ENCODE measurements at regions of chr19 and their contacts with region 1.

Region 1: DNA sequence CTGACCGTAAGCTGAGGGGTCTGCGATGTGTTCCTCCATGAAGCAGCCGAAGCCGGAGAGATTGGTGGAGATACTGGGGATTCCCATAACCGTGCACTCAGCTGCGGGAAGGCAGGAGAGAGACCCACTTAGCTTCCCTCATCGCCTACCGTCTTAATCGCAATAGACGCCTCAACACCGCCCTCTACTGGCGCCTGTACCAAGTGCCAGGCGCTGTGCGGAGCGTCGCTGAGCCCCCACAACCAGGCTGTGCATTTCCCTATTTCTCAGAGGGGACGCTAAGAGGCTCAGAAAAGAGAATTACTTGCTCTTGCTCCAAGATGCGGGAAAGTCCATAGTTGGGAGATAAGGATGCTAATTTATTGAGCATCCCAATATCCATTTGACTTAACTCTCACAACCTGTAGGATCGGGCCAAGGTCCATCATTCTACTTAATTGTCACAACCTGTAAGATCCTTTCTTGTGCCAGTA is 5.8 kb downstream of the FTL start:
- DNase-seq: peak; percentile 78 to 91 (median 85)
- H3K4me3 ChIP-seq: no peak overlapping the region
- H3K27ac ChIP-seq: no peak overlapping the region
- H3K4me1 ChIP-seq: peaks cover 3% of the 10 kb centered on the region
- H3K27me3 ChIP-seq: no peaks in the 10 kb centered on the region
- CTCF ChIP-seq: peak; percentile 81 to 84 (median 84)
- EP300 ChIP-seq: no peak
- POLR2A ChIP-seq: no peak

Region 2: GRCh38 chr19:48780631-48781391 is 190.1 kb before region 1 on chr19:
- intact Hi-C with region 1: loop called in 2 of 4 experiments (anchors 5 kb)
- DNase-seq: peak in 1 of 5 donors; percentile 49
- H3K4me3 ChIP-seq: no peak overlapping the region
- H3K27ac ChIP-seq: no peak overlapping the region
- H3K4me1 ChIP-seq: no peaks in the 10 kb centered on the region
- H3K27me3 ChIP-seq: no peaks in the 10 kb centered on the region
- CTCF ChIP-seq: no peak
- EP300 ChIP-seq: no peak
- POLR2A ChIP-seq: no peak

Region 3: DNA sequence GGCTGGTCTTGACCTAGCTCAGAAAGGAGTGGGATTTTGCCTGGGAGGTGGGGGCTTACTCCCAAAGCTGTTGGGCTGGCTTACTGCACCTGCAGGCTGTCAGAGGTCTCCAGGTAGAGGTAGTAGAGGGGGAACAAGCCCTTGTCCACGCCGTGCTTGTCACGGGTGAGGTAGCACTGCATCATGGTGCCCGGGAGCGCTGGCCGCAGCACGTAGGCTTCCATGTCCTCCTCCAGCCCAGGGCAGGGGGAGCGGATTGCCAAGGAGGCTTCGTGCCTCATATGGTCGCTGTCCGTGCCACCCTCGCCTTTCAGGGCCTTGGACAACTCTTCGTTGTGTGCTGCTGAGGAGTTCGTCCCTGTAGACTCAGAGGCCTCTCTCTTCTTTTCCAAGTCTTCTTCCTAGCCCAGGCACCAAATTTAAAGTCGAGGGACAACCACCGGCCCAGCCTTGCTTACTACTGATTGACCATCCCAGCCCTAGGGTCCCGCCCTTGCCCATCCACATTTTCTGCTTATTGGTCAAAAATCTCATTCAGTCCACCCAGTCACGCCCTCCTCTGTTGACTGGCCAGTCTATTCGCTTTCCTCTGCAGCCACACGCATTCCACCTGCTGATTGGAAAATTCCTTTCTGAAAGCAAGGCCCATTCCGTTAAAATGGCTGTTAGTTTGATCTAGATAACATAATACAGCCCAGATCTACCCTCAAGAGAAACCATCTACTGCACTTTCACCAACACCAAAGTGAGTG is 82.9 kb before region 1 on chr19:
- intact Hi-C with region 1: no loop called
- DNase-seq: no peak
- H3K4me3 ChIP-seq: no peak overlapping the region
- H3K27ac ChIP-seq: no peak overlapping the region
- H3K4me1 ChIP-seq: no peaks in the 10 kb centered on the region
- H3K27me3 ChIP-seq: no peaks in the 10 kb centered on the region
- CTCF ChIP-seq: no peak
- EP300 ChIP-seq: no peak
- POLR2A ChIP-seq: no peak

Region 4: DNA sequence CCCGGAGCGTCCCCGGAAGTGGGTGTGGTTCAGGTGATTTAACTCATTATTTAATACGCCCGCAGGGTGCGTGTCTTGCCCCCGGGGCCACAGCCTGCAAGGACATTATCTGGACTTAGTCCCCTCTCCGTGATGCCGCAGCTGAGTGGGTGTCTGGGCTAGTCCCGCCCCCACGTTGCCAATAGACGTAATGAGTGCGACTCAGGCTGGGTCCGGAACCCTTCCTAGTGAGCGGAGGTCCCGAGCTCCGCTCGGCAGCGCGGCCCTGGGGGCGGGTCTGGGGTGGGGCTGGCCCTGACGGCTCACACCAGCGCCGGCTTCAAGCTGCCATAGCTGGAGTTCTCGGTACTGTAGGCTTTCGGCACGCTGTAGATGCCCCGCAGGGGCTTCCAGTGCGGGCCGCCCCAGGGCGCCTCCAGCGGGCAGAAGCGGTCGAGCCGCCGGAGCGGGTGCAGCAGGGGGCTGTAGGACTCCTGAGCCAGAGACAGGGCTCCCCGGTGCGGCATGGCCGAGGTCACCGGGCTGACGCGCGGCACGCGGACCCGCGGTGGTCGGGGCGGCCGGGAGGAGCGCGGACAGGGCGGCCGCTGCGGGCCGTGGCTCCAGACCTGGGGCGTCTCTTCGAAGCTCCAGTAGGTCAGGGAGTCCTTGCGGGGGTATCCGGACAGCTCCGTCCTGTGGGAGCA is 46.9 kb after region 1 on chr19:
- intact Hi-C with region 1: no loop called
- DNase-seq: peak in 3 of 5 donors; percentile 29 to 62 (median 54)
- H3K4me3 ChIP-seq: peak overlapping the region; percentile 29
- H3K27ac ChIP-seq: no peak overlapping the region
- H3K4me1 ChIP-seq: peaks cover 7% of the 10 kb centered on the region
- H3K27me3 ChIP-seq: no peaks in the 10 kb centered on the region
- CTCF ChIP-seq: no peak
- EP300 ChIP-seq: no peak
- POLR2A ChIP-seq: no peak

Region 5: GRCh38 chr19:49097455-49098288 is 126.7 kb after region 1 on chr19:
- intact Hi-C with region 1: no loop called
- DNase-seq: peak; percentile 50 to 76 (median 71)
- H3K4me3 ChIP-seq: no peak overlapping the region
- H3K27ac ChIP-seq: no peak overlapping the region
- H3K4me1 ChIP-seq: no peaks in the 10 kb centered on the region
- H3K27me3 ChIP-seq: no peaks in the 10 kb centered on the region
- CTCF ChIP-seq: peak; percentile 89 to 97 (median 94)
- EP300 ChIP-seq: no peak
- POLR2A ChIP-seq: no peak

Measured in ovary (tissue), 10 donors.